OCI-LY7 (cell line): ENCODE measurements at regions of chr9 and their contacts with region 1.

Region 1: GRCh38 chr9:128127990-128128835 is 684 bp upstream of the PTGES2 start:
- DNase-seq: peak; percentile 96
- H3K4me3 ChIP-seq: peak overlapping the region; percentile 84
- H3K27ac ChIP-seq: peak overlapping the region; percentile 85
- H3K4me1 ChIP-seq: peaks cover 26% of the 10 kb centered on the region
- CTCF ChIP-seq: no peak

Region 2: DNA sequence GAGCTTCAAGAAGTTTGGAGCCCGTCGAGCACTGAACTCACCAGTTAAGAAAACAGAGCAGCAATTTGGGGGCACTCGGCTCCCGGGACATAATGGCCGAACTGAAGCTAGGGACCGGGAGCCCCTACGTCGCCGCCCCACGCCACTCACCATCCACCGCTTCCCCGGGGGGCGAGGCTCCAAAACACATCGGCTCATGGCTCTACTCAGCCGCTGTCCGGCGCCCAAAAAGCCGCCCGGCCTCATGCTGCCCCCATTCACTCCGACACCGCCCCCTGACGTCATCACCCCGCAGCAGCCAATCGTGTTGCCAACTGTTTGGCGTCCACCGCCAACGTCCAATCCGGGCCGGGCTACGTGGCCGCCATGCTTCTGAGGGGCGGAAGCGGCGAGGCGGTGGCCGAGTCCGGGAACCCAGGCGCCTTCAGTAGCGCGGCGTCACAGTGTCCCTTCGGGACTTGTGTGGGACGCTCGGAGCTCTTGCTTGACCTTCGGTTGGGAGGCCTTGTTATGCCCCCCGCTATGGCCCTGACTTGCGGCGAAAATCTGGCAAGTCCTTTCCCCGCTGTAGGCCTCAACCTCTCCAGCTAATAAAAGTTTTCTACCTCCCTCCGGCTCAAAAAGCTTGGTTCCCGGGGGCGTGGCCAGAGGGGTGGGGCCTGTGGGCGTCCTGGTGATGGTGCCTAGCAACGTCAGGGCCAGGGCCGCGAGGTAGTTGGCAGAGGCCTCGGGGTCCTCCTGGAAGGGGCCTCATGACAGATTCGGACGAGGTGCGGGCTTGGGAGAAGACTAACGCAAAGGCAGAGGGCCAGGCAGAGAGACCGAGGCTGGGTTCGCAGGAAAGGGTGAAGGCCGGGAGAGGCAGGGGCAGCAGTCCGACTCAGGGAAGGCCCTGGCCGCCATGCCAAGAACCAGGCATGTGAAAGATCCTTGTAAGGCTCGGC is 412.5 kb before region 1 on chr9 and contains the starts of genes PTRH1 and TTC16:
- CTCF ChIA-PET with region 1: no interaction called
- POLR2A ChIA-PET with region 1: no interaction called
- intact Hi-C with region 1: no loop called
- DNase-seq: peak; percentile 96
- H3K4me3 ChIP-seq: peak within 1 kb of the TSS; percentile 72
- H3K27ac ChIP-seq: no peak within 1 kb of the TSS
- H3K4me1 ChIP-seq: peaks cover 28% of the 10 kb centered on the region
- CTCF ChIP-seq: no peak
- total RNA-seq, gene PTRH1: 11.1 and 12.4 TPM in 2 replicates
- total RNA-seq, gene TTC16: not detected in 2 replicates

Region 3: GRCh38 chr9:128043467-128043868 is 84.7 kb before region 1 on chr9:
- CTCF ChIA-PET with region 1: no interaction called
- POLR2A ChIA-PET with region 1: no interaction called
- intact Hi-C with region 1: no loop called
- DNase-seq: no peak
- H3K4me3 ChIP-seq: no peak overlapping the region
- H3K27ac ChIP-seq: no peak overlapping the region
- H3K4me1 ChIP-seq: no peaks in the 10 kb centered on the region
- CTCF ChIP-seq: no peak

Region 4: DNA sequence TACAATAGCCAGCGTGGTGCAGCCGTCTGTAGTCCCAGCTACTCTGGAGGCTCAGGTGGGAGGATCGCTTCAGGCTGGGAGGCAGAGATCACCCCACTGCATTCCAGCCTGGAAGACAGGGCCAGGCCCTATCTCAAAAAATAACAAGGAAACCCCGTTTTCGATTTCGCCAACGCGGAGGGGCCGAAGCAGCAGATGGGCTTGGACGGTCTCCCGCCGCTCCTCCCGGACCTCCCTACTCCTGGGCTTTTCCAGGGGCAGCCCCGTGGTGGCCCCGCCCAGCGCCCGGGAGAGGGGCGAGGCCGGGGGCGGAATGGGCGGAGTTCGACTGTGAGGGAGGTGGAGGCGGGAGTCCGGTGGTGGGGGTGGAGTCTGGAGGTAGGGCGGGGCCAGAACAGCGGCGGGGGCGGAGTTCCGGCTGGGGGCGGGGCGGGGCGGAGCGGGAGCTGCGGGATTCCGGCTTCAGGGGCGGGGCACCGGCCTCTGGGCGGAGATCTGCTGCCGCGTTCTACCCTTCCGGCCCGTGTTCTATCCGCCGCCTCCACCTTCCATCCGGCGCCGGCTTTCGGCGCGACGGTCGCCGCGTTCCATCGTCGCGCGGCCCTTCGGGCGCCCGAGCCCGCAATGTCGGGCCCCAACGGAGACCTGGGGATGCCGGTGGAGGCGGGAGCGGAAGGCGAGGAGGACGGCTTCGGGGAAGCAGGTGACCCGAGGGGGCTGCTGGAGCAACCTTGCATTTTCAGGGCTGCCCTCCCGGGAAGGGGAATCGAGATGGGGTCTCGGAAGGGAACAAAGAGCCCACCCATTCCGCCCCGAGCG is 31.8 kb after region 1 on chr9 and contains the start of gene BBLN:
- CTCF ChIA-PET with region 1: no interaction called
- POLR2A ChIA-PET with region 1: interaction called, 3 read pairs
- intact Hi-C with region 1: loop called (anchors 1 kb)
- DNase-seq: peak; percentile 94
- H3K4me3 ChIP-seq: peak within 1 kb of the TSS; percentile 99
- H3K27ac ChIP-seq: peak within 1 kb of the TSS; percentile 55
- H3K4me1 ChIP-seq: peaks cover 14% of the 10 kb centered on the region
- CTCF ChIP-seq: no peak
- total RNA-seq, gene BBLN: 82.0 and 104 TPM in 2 replicates

Region 5: DNA sequence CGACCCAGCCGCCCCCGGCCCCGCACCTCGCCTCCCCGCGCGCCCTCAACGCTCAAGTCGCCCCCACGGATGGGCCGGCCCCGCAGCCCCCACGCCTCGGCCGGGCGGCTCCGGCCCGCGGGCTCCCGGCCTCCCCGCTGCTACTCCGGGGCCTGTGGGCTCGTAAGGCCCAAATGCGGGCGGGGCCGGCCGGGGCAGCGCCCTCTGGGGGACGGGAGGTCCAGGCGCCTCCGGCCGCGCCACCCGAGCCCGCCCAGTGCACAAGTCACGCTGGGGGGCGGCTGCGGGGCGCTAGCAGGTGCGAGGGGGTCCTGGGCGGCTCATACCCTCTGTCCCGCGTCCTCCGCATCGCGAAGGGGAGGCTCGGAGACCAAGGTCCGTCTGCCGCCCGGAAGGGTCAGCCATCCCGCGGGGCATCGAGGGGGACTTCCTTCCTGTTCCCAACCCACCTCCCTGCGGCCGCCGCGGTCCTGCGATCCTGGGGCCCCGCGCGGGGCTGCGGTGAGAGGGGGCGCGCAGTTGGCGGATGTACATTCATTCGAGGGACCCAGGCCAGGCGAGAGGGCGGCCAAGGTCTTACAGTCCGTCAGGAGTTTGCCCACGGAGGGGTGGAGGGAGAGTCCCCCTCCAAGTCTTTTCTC is 63.3 kb after region 1 on chr9 and contains the start of gene CIZ1:
- CTCF ChIA-PET with region 1: no interaction called
- POLR2A ChIA-PET with region 1: no interaction called
- intact Hi-C with region 1: loop called (anchors 5 kb)
- DNase-seq: peak; percentile 89
- H3K4me3 ChIP-seq: peak within 1 kb of the TSS; percentile 73
- H3K27ac ChIP-seq: peak within 1 kb of the TSS; percentile 17
- H3K4me1 ChIP-seq: peaks cover 21% of the 10 kb centered on the region
- CTCF ChIP-seq: peak; percentile 81
- total RNA-seq, gene CIZ1: 45.4 and 47.7 TPM in 2 replicates